ENCODE measurements at regions of chr2 and their contacts with region 1.

Region 1: DNA sequence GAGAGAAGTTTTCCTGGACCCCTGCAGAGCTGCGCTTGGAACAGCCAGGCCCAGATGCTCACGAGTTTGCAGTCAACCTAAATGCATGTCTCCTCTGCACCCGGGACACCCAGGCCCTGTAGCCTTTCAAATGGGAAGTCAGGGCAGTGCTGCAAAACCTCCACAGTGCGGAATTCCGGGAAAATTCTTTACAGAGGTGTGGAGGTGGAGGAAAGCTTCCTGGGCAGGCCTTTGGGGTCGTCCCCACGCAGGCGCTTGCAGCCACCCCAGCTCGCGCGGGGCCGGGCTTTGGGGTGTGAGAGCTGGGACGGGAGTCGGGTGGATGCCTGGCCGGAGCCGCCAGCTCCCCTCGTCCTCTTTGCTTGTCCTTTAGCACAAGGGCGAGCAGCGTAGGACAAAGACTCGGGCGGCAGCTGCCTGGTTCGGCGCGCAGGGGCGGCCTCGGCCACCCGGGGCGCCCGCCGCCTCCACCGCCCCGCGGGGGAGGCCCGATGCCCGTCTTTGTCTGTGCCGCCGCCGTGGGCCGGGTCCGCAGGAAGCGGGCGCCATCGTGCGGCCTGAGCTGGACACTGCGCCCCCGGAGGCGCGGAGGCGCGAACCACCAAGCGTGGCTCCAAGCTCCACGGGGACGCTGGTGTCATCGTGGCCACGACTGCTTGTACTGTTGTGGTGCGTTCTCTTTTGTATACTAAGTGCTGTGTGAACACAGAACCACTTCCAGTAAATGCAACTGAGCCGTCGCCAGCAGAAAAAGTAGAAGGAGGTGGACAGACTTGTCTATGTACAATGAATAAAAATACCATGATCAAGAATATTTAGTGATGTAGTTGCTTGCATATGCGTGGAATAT is 28.2 kb upstream of the BCL11A start:
- DNase-seq: peak; percentile 4
- H3K4me3 ChIP-seq: peak overlapping the region; percentile 54
- H3K27ac ChIP-seq: no peak overlapping the region
- H3K27me3 ChIP-seq: peaks cover 18% of the 10 kb centered on the region
- CTCF ChIP-seq: peak; percentile 86

Region 2: DNA sequence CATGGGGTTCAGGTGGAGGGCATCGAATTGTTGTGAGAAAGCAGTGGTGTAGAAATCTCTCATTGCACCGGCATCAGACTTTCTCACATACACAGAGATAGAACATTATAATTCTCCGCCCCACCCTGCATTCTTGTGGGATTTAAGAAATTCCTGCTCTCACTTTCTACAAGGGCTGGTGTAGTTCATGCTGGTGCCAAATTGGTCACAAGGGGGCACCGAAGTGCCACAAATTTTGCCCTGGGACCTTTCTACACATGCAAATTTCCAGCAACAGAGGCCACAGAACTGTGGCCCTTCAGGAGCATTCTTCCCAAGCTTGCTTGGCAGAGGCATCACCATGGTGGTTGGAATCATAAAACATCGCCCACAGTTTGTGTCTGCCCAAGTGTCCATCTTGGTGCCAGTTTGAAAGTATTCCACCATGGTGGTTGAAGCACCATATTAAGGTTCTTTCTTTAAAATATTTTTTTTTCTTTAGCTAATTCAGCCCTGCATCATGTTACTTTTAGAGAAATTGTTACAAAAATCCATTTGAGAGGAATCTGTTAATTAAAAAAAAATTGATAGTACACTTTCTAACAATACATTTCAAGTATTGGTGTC is 1819.4 kb before region 1 on chr2:
- CTCF ChIA-PET with region 1: interaction called, 15 read pairs
- POLR2A ChIA-PET with region 1: no interaction called
- DNase-seq: peak; percentile 4
- H3K4me3 ChIP-seq: no peak overlapping the region
- H3K27ac ChIP-seq: no peak overlapping the region
- H3K27me3 ChIP-seq: no peaks in the 10 kb centered on the region
- CTCF ChIP-seq: peak; percentile 62

Region 3: DNA sequence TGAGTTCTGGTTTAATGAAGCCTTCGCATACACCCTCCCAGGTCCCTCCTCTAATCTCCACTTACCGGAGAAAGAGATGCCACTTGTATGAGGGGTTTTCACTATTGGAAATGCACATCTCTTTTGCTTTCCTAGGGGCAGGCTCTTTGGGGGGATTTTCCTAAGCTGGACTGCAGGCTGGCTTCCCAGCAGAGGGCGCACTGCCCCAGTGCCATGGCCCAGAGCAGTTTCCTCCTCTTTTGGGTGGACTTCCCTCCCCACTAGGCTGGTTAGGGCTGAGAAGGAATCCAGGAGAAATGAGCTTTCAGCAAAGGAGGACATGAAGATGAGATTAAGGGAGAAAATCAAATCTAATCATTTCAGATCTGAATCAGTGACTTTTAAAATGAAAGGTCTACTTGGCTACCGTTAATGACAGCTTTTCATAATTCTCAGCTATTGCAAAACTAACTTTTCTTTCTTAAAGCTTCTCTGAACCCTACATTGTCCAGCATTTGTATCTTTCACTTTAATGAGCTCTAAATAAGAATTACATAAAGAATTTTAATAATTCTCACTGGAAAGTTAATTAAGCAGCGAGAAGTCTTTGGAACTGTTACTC is 1556.4 kb before region 1 on chr2:
- CTCF ChIA-PET with region 1: interaction called, 62 read pairs
- POLR2A ChIA-PET with region 1: no interaction called
- DNase-seq: no peak
- H3K4me3 ChIP-seq: no peak overlapping the region
- H3K27ac ChIP-seq: no peak overlapping the region
- H3K27me3 ChIP-seq: no peaks in the 10 kb centered on the region
- CTCF ChIP-seq: peak; percentile 88

Region 4: GRCh38 chr2:59301466-59302402 is 1279.9 kb before region 1 on chr2:
- CTCF ChIA-PET with region 1: interaction called, 16 read pairs
- POLR2A ChIA-PET with region 1: no interaction called
- DNase-seq: peak; percentile 37
- H3K4me3 ChIP-seq: no peak overlapping the region
- H3K27ac ChIP-seq: no peak overlapping the region
- H3K27me3 ChIP-seq: no peaks in the 10 kb centered on the region
- CTCF ChIP-seq: peak; percentile 54

Region 5: DNA sequence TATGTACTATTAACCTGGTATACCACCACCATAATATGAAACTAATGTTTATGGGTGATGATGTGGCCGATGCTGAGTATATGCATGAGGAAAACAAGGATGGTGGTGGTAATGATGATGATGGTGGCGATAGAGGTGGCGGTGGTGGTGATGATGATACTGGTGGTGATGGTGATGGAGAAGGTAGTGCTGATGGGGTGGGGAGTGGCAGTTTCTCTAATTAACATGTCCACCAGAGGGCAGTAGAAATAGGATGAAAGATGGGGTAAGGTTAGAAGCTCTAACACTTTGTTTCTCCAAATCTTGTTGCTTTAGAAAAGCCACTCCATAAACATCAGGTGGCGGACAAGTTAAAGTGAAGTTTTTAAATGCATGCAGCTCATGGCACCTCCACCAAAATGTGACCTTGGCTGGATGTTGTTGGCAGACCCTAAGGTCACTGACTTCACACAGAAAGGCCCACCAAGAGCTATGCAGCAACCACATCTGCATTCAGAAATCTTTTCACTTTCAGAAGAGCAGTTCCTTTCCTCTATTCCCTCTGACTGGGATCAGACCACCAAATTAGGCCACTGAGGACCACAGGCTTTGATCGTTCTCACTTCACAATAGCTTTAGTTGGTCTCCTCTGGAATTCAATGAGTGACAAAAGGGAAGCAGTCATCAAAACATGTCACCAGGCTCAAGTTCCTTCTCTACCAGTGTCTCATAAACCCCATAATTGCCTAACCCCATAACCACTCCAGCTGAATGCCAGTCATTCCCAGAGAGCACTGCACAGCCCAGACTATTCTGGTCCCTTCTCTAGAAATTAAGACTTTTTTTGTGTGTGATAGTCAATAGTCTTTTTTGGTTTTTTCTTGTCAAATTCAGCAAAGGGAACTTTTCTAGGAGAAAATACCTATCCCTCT is 20.7 kb before region 1 on chr2:
- CTCF ChIA-PET with region 1: interaction called, 81 read pairs
- POLR2A ChIA-PET with region 1: no interaction called
- DNase-seq: no peak
- H3K4me3 ChIP-seq: no peak overlapping the region
- H3K27ac ChIP-seq: no peak overlapping the region
- H3K27me3 ChIP-seq: peaks cover 32% of the 10 kb centered on the region
- CTCF ChIP-seq: peak; percentile 64

Region 6: GRCh38 chr2:60569680-60570111 is 12.0 kb before region 1 on chr2:
- CTCF ChIA-PET with region 1: interaction called, 28 read pairs
- POLR2A ChIA-PET with region 1: no interaction called
- DNase-seq: no peak
- H3K4me3 ChIP-seq: peak overlapping the region; percentile 2
- H3K27ac ChIP-seq: no peak overlapping the region
- H3K27me3 ChIP-seq: peaks cover 25% of the 10 kb centered on the region
- CTCF ChIP-seq: no peak

Region 7: GRCh38 chr2:60621688-60622429 is 40.2 kb after region 1 on chr2:
- CTCF ChIA-PET with region 1: no interaction called
- POLR2A ChIA-PET with region 1: no interaction called
- DNase-seq: no peak
- H3K4me3 ChIP-seq: no peak overlapping the region
- H3K27ac ChIP-seq: no peak overlapping the region
- H3K27me3 ChIP-seq: no peaks in the 10 kb centered on the region
- CTCF ChIP-seq: no peak

Measured in AG04450 (cell line).